ENCODE measurements at regions of chr6 and their contacts with region 1.

Region 1: GRCh38 chr6:31958741-31959739 is at the starts of genes NELFE and SKIC2:
- H3K4me3 ChIP-seq: peak within 1 kb of the TSS; percentile 78
- H3K27ac ChIP-seq: peak within 1 kb of the TSS; percentile 39; the same call in 1 of the 2 replicates
- H3K4me1 ChIP-seq: no peaks in the 10 kb centered on the region; the same call in 1 of the 2 replicates
- CTCF ChIP-seq: no peak

Region 2: GRCh38 chr6:31689249-31690110 is 269.6 kb before region 1 on chr6:
- CTCF ChIA-PET with region 1: no interaction called
- POLR2A ChIA-PET with region 1: no interaction called
- H3K4me3 ChIP-seq: no peak overlapping the region
- H3K27ac ChIP-seq: no peak overlapping the region
- H3K4me1 ChIP-seq: no peaks in the 10 kb centered on the region
- CTCF ChIP-seq: no peak; the same call in 1 of the 2 replicates

Region 3: GRCh38 chr6:31901953-31902643 is 56.9 kb before region 1 on chr6 and contains the start of gene ZBTB12:
- CTCF ChIA-PET with region 1: interaction called, 29 read pairs
- POLR2A ChIA-PET with region 1: interaction called, 11 read pairs
- H3K4me3 ChIP-seq: peak within 1 kb of the TSS; percentile 62
- H3K27ac ChIP-seq: peak within 1 kb of the TSS; percentile 9
- H3K4me1 ChIP-seq: peaks cover 9% of the 10 kb centered on the region
- CTCF ChIP-seq: peak; percentile 57; the same call in 1 of the 2 replicates

Region 4: GRCh38 chr6:31971993-31972708 is 13.1 kb after region 1 on chr6 and contains the start of gene DXO:
- CTCF ChIA-PET with region 1: interaction called, 5 read pairs
- POLR2A ChIA-PET with region 1: interaction called, 64 read pairs
- H3K4me3 ChIP-seq: peak within 1 kb of the TSS; percentile 83
- H3K27ac ChIP-seq: peak within 1 kb of the TSS; percentile 74
- H3K4me1 ChIP-seq: peaks cover 5% of the 10 kb centered on the region
- CTCF ChIP-seq: no peak